ENCODE measurements at regions of chr10 and their contacts with region 1.

Region 1: GRCh38 chr10:84352251-84352842 is 24.0 kb downstream of the CCSER2 start:
- DNase-seq: peak; percentile 63
- H3K4me3 ChIP-seq: no peak overlapping the region
- H3K27ac ChIP-seq: no peak overlapping the region
- H3K4me1 ChIP-seq: peaks cover 7% of the 10 kb centered on the region
- H3K27me3 ChIP-seq: no peaks in the 10 kb centered on the region
- CTCF ChIP-seq: peak; percentile 66 to 78
- POLR2A ChIP-seq: no peak

Region 2: GRCh38 chr10:84333864-84334451 is 18.4 kb before region 1 on chr10:
- CTCF ChIA-PET with region 1: interaction called, 43 read pairs
- POLR2A ChIA-PET with region 1: no interaction called
- dilution Hi-C with region 1: no loop called
- intact Hi-C with region 1: no loop called
- DNase-seq: no peak
- H3K4me3 ChIP-seq: no peak overlapping the region
- H3K27ac ChIP-seq: no peak overlapping the region
- H3K4me1 ChIP-seq: peaks cover 12% of the 10 kb centered on the region
- H3K27me3 ChIP-seq: no peaks in the 10 kb centered on the region
- CTCF ChIP-seq: no peak
- POLR2A ChIP-seq: no peak

Region 3: DNA sequence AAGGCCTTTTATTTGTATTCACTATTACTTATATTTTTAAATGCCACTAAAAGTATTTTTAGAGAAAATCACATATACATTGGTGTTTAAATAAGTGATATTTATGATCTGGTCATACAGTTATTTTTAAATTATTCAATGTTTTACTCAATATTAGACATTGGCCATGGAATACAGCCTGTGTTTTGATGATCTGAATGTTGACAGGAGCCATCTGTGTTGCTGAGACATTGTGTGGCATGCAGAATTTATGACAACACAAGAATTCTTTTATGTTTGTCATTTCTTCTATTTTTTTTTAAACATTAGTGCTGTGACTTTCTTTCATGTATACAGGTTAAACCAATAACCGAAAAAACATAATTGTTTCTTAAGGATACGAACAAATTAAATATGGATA is 132.2 kb after region 1 on chr10:
- CTCF ChIA-PET with region 1: no interaction called
- POLR2A ChIA-PET with region 1: no interaction called
- dilution Hi-C with region 1: no loop called
- intact Hi-C with region 1: no loop called
- DNase-seq: no peak
- H3K4me3 ChIP-seq: no peak overlapping the region
- H3K27ac ChIP-seq: no peak overlapping the region
- H3K4me1 ChIP-seq: no peaks in the 10 kb centered on the region
- H3K27me3 ChIP-seq: no peaks in the 10 kb centered on the region
- CTCF ChIP-seq: no peak
- POLR2A ChIP-seq: no peak